Ovary (tissue), 10 donors: ENCODE measurements at regions of chr7 and their contacts with region 1.

Region 1: GRCh38 chr7:150988230-150989226 is 2.3 kb upstream of the NOS3 start:
- DNase-seq: peak in 4 of 5 donors; percentile 72 to 79 (median 77)
- H3K4me3 ChIP-seq: no peak overlapping the region
- H3K27ac ChIP-seq: peak overlapping the region in 1 of 2 donors; percentile 13
- H3K4me1 ChIP-seq: peaks cover 5% of the 10 kb centered on the region
- H3K27me3 ChIP-seq: no peaks in the 10 kb centered on the region
- CTCF ChIP-seq: peak; percentile 61 to 87 (median 77)
- EP300 ChIP-seq: no peak
- POLR2A ChIP-seq: no peak

Region 2: GRCh38 chr7:150898475-150899011 is 90.0 kb before region 1 on chr7:
- intact Hi-C with region 1: loop called (anchors 5 kb)
- DNase-seq: peak; percentile 68 to 88 (median 80)
- H3K4me3 ChIP-seq: no peak overlapping the region
- H3K27ac ChIP-seq: no peak overlapping the region
- H3K4me1 ChIP-seq: no peaks in the 10 kb centered on the region
- H3K27me3 ChIP-seq: no peaks in the 10 kb centered on the region
- CTCF ChIP-seq: peak; percentile 85 to 91 (median 90)
- EP300 ChIP-seq: no peak
- POLR2A ChIP-seq: no peak

Region 3: DNA sequence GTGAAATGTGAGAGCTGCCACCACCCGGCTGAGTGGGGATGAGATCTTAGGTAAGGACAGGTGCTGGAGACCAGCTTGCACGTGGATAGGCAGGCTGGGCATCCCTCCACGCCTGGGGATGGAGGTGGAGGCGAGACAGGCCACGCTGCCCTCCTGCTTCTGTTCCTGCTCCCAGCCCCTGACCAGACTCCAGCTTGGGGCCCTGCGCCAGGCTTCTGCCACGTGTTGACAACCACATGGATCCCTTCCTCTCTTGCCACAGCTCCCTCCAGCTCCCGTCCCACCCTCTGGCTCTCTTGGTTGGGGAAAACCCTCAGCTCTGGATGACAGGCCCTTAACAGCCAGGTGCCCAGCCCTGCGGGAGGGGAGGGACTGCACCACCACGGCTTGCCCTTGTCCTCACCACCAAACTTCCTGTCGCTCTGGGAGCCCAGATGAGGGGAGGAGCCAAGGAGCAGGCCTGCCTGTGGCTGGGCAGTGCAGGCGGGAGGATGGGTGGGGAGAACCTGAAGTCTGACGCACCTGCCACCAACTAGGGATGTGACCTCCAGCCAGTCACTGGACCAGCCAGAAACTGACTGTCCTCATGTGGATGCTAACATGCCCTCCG is 46.4 kb before region 1 on chr7:
- intact Hi-C with region 1: no loop called
- DNase-seq: peak in 2 of 5 donors; percentile 29 to 34
- H3K4me3 ChIP-seq: no peak overlapping the region
- H3K27ac ChIP-seq: no peak overlapping the region
- H3K4me1 ChIP-seq: no peaks in the 10 kb centered on the region
- H3K27me3 ChIP-seq: no peaks in the 10 kb centered on the region
- CTCF ChIP-seq: no peak
- EP300 ChIP-seq: no peak
- POLR2A ChIP-seq: no peak

Region 4: DNA sequence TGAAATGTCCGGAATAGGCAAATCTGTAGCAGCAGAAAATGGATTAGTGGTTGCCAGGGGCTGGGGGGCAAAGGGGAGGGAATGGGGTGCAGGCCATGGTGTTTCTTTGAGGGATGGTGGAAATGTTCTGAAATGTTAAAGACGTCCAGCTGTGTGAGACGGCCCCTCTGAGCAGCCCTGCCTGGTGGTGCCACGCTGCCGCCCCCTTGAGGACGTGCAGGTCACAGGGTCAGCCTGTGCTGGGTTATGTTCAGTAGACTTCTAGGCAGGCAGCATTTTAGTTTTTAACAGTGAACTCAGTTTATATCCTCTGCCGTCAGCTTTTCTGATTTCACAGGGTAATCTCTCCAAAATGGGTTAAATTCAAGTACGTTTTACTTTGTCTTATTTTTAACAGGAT is 362.5 kb after region 1 on chr7:
- intact Hi-C with region 1: no loop called
- DNase-seq: no peak
- H3K4me3 ChIP-seq: no peak overlapping the region
- H3K27ac ChIP-seq: no peak overlapping the region
- H3K4me1 ChIP-seq: no peaks in the 10 kb centered on the region
- H3K27me3 ChIP-seq: no peaks in the 10 kb centered on the region
- CTCF ChIP-seq: no peak
- EP300 ChIP-seq: no peak
- POLR2A ChIP-seq: no peak